Left cardiac atrium (tissue), 4 donors: ENCODE measurements at regions of chr5 and their contacts with region 1.

Region 1: DNA sequence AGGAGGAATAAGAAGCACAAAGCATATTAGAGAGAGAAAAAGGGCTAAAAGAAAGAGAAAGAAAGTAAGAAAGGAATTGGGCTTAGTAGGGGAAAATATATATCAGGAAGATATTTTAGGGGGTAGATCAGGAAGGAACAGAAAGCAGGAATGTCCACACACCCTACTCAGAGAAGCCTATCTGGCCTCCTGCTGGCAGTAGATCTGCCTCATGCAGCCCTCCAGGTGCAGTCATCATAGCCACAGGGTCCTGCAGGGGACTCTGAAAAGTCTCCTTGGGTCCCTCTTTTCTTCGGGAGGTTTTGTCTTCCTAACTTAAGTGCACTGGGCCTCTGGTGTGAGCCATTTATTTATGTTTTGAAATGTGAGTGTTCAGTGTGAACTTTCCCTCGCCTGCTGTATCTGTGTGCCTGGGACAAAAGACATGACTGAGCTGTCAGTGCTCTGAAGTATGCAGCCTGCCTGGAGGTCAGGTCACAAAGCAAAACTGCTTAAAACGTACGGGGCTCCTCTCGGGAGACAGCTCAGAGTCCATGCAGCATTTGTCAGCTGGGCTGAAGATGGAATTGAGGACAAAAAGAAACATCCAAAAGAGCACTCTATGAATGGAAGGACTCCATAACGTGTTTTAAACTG is 151.5 kb upstream of the GDNF start:
- DNase-seq: no peak
- ATAC-seq: peak; percentile 59 to 64

Region 2: GRCh38 chr5:37370864-37371726 is 620.3 kb before region 1 on chr5 and contains the start of gene NUP155:
- intact Hi-C with region 1: no loop called
- DNase-seq: peak; percentile 94
- ATAC-seq: peak; percentile 99
- total RNA-seq, gene NUP155: 11.9 to 14.1 TPM

Region 3: DNA sequence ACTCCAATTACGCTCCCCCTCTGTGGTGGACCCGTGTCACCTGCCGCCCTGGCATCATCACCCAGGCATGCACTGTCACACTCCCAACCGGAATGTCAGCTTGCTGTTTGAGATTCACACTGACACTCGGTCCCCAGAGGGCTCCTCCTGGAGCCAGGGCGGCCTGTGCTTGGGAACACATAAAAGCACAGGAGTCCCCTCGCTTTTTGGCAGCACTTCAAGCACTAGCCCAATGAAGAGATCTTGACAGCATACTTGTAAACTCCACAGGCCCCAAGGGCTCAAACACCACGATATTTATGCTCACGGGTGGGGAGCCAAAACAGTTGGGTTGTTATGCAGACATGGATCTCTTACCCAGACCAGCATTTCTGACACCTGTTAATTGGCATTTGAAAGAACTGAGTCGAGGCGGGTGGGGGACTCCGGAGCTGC is 176.2 kb after region 1 on chr5:
- intact Hi-C with region 1: loop called in 1 of 2 experiments (anchors 10 kb)
- DNase-seq: peak; percentile 56
- ATAC-seq: peak; percentile 91 to 97